Naive thymus-derived CD4-positive, alpha-beta T cell (primary cell): ENCODE measurements at regions of chr6 and their contacts with region 1.

Region 1: GRCh38 chr6:108958900-108959770 is 110.9 kb downstream of the ARMC2 start:
- DNase-seq: no peak
- ATAC-seq: no peak
- H3K4me3 ChIP-seq: no peak overlapping the region
- H3K4me3 Mint-ChIP-seq: peak overlapping the region in 1 of 10 donors; percentile 62
- H3K27ac ChIP-seq: no peak overlapping the region
- H3K27ac Mint-ChIP-seq: peak overlapping the region in 2 of 9 donors; percentile 36 to 67
- H3K4me1 ChIP-seq: no peaks in the 10 kb centered on the region
- H3K4me1 Mint-ChIP-seq: peaks cover 10 to 34% (median 17%) of the 10 kb centered on the region in 7 donors
- H3K27me3 ChIP-seq: no peaks in the 10 kb centered on the region
- H3K27me3 Mint-ChIP-seq: no peaks in the 10 kb centered on the region

Region 2: GRCh38 chr6:108820006-108820405 is 139.1 kb before region 1 on chr6:
- CTCF ChIA-PET with region 1: no interaction called
- POLR2A ChIA-PET with region 1: no interaction called
- intact Hi-C with region 1: no loop called
- DNase-seq: no peak
- ATAC-seq: no peak
- H3K4me3 ChIP-seq: no peak overlapping the region
- H3K4me3 Mint-ChIP-seq: no peak overlapping the region
- H3K27ac ChIP-seq: no peak overlapping the region
- H3K27ac Mint-ChIP-seq: no peak overlapping the region
- H3K4me1 ChIP-seq: no peaks in the 10 kb centered on the region
- H3K4me1 Mint-ChIP-seq: peaks cover 0 to 3% (median 0%) of the 10 kb centered on the region in 7 donors
- H3K27me3 ChIP-seq: no peaks in the 10 kb centered on the region
- H3K27me3 Mint-ChIP-seq: peaks cover 0 to 34% (median 4%) of the 10 kb centered on the region in 5 donors

Region 3: GRCh38 chr6:108983151-108983550 is 24.0 kb after region 1 on chr6:
- CTCF ChIA-PET with region 1: no interaction called
- POLR2A ChIA-PET with region 1: no interaction called
- intact Hi-C with region 1: loop called in 1 of 2 experiments (anchors 1 kb)
- DNase-seq: no peak
- ATAC-seq: no peak
- H3K4me3 ChIP-seq: no peak overlapping the region
- H3K4me3 Mint-ChIP-seq: no peak overlapping the region
- H3K27ac ChIP-seq: no peak overlapping the region
- H3K27ac Mint-ChIP-seq: no peak overlapping the region
- H3K4me1 ChIP-seq: no peaks in the 10 kb centered on the region
- H3K4me1 Mint-ChIP-seq: peaks cover 0 to 7% (median 0%) of the 10 kb centered on the region in 7 donors
- H3K27me3 ChIP-seq: no peaks in the 10 kb centered on the region
- H3K27me3 Mint-ChIP-seq: peaks cover 0 to 13% (median 0%) of the 10 kb centered on the region in 5 donors

Region 4: DNA sequence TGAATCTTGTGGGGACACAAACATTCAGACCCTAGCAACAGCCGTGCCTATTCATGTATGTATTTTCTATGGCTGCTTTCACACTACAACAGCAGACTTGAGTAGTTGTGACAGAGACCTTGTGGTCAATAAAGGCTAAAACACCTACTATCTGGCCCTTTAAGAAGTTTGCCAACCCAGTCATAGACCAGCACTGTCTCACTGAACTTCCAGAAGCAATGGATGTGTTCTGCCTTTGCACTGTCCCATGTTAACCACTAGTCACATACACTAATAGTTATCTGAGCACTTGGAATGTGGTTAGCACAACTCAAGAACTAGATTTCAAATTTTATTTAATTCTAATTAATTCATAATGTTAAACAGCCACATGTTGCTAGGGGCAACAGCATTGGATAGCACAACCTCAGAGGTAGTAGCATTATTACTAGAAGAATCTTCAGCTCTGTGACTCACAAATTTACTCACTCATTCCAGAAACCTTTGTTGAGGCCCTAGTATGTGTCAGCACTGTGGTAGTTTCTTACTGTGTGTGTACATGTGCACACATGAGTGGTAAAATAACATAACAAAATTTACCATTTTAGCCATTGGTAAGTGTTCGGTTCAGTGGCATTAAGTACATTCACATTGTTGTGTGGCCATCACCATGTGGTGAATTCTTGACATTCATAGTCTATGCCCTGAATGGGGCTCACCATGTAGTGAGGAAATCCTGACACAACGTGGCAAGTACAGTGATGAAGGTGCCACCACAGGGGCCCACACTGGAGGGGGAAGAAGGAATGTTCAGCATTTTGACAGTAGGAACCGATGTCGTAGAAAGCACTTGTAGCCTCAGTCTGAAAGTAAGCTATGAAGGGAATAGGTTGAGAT is 243.5 kb after region 1 on chr6:
- CTCF ChIA-PET with region 1: no interaction called
- POLR2A ChIA-PET with region 1: no interaction called
- intact Hi-C with region 1: no loop called
- DNase-seq: no peak
- ATAC-seq: no peak
- H3K4me3 ChIP-seq: no peak overlapping the region
- H3K4me3 Mint-ChIP-seq: no peak overlapping the region
- H3K27ac ChIP-seq: no peak overlapping the region
- H3K27ac Mint-ChIP-seq: no peak overlapping the region
- H3K4me1 ChIP-seq: no peaks in the 10 kb centered on the region
- H3K4me1 Mint-ChIP-seq: no peaks in the 10 kb centered on the region
- H3K27me3 ChIP-seq: no peaks in the 10 kb centered on the region
- H3K27me3 Mint-ChIP-seq: peaks cover 0 to 8% (median 0%) of the 10 kb centered on the region in 5 donors